Mucosa of descending colon (tissue), 3 donors: ENCODE measurements at regions of chr10 and their contacts with region 1.

Region 1: GRCh38 chr10:102904346-102904745 is 13.7 kb upstream of the CNNM2 start:
- DNase-seq: no peak
- ATAC-seq: no peak
- H3K4me3 ChIP-seq: no peak overlapping the region
- H3K4me1 ChIP-seq: no peaks in the 10 kb centered on the region
- CTCF ChIP-seq: no peak

Region 2: GRCh38 chr10:102729029-102730026 is 175.0 kb before region 1 on chr10:
- intact Hi-C with region 1: loop called (anchors 5 to 10 kb)
- DNase-seq: peak; percentile 81 to 88 (median 88)
- ATAC-seq: peak; percentile 97
- H3K4me3 ChIP-seq: no peak overlapping the region
- H3K4me1 ChIP-seq: no peaks in the 10 kb centered on the region
- CTCF ChIP-seq: peak; percentile 79

Region 3: GRCh38 chr10:102835007-102835482 is 69.3 kb before region 1 on chr10:
- intact Hi-C with region 1: loop called (anchors 5 kb)
- DNase-seq: peak; percentile 50 to 87 (median 77)
- ATAC-seq: peak; percentile 90
- H3K4me3 ChIP-seq: no peak overlapping the region
- H3K4me1 ChIP-seq: no peaks in the 10 kb centered on the region
- CTCF ChIP-seq: peak; percentile 64

Region 4: GRCh38 chr10:102845352-102845902 is 58.9 kb before region 1 on chr10:
- intact Hi-C with region 1: no loop called
- DNase-seq: no peak
- ATAC-seq: no peak
- H3K4me3 ChIP-seq: no peak overlapping the region
- H3K4me1 ChIP-seq: no peaks in the 10 kb centered on the region
- CTCF ChIP-seq: no peak

Region 5: GRCh38 chr10:102988404-102989314 is 84.3 kb after region 1 on chr10:
- intact Hi-C with region 1: no loop called
- DNase-seq: no peak
- ATAC-seq: peak; percentile 44
- H3K4me3 ChIP-seq: no peak overlapping the region
- H3K4me1 ChIP-seq: no peaks in the 10 kb centered on the region
- CTCF ChIP-seq: no peak